ENCODE measurements at regions of chr4 and their contacts with region 1.

Region 1: GRCh38 chr4:2843263-2843940 is at the start of gene ADD1:
- DNase-seq: peak; percentile 83
- H3K4me3 Mint-ChIP-seq: peak within 1 kb of the TSS; percentile 88
- H3K27ac Mint-ChIP-seq: peak within 1 kb of the TSS; percentile 95
- H3K4me1 Mint-ChIP-seq: peaks cover 19% of the 10 kb centered on the region
- H3K27me3 Mint-ChIP-seq: no peaks in the 10 kb centered on the region
- CTCF ChIP-seq: no peak
- total RNA-seq, gene ADD1: 131 and 161 TPM in 2 replicates

Region 2: GRCh38 chr4:2761035-2761923 is 82.1 kb before region 1 on chr4:
- CTCF ChIA-PET with region 1: interaction called, 3 read pairs
- POLR2A ChIA-PET with region 1: interaction called, 4 read pairs
- intact Hi-C with region 1: loop called (anchors 2 kb)
- DNase-seq: peak; percentile 45
- H3K4me3 Mint-ChIP-seq: no peak overlapping the region
- H3K27ac Mint-ChIP-seq: no peak overlapping the region
- H3K4me1 Mint-ChIP-seq: peaks cover 7% of the 10 kb centered on the region
- H3K27me3 Mint-ChIP-seq: no peaks in the 10 kb centered on the region
- CTCF ChIP-seq: no peak

Region 3: GRCh38 chr4:2798399-2799223 is 44.8 kb before region 1 on chr4:
- CTCF ChIA-PET with region 1: no interaction called
- POLR2A ChIA-PET with region 1: interaction called, 18 read pairs
- intact Hi-C with region 1: no loop called
- DNase-seq: peak; percentile 47
- H3K4me3 Mint-ChIP-seq: peak overlapping the region; percentile 16
- H3K27ac Mint-ChIP-seq: peak overlapping the region; percentile 67
- H3K4me1 Mint-ChIP-seq: peaks cover 69% of the 10 kb centered on the region
- H3K27me3 Mint-ChIP-seq: no peaks in the 10 kb centered on the region
- CTCF ChIP-seq: no peak

Region 4: GRCh38 chr4:2817701-2818350 is 25.6 kb before region 1 on chr4:
- CTCF ChIA-PET with region 1: no interaction called
- POLR2A ChIA-PET with region 1: interaction called, 17 read pairs
- intact Hi-C with region 1: no loop called
- DNase-seq: peak; percentile 56
- H3K4me3 Mint-ChIP-seq: peak overlapping the region; percentile 67
- H3K27ac Mint-ChIP-seq: peak overlapping the region; percentile 65
- H3K4me1 Mint-ChIP-seq: peaks cover 15% of the 10 kb centered on the region
- H3K27me3 Mint-ChIP-seq: no peaks in the 10 kb centered on the region
- CTCF ChIP-seq: no peak

Measured in MCF 10A (cell line).